CD8-positive, alpha-beta memory T cell (primary cell): ENCODE measurements at regions of chr10 and their contacts with region 1.

Region 1: DNA sequence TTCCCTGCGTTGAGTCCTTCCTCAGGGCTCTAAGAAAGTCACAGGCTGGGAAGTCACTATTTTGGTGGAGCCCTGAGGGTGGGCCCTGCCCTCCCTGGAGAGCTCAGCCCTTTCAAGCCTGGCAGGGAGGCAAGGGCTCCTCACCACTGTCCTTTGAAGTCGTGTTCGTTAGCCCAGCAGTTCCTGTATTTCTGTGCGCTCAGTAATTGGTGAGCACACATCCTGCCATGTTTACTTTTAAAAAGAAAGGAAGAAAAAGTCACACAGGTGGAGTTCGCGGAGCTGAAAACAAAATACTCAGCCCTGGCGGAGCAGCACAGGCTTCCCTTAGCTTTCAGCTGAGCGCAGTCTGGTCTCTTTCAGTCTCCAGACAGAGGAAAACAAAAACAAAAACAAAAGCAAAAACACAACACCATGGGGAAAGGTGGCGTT is 37.1 kb downstream of the PRKCQ start:
- DNase-seq: peak; percentile 18 to 81 (median 70)
- H3K4me3 ChIP-seq: peak overlapping the region; percentile 53
- H3K4me3 Mint-ChIP-seq: peak overlapping the region; percentile 77 to 96 (median 93)
- H3K27ac ChIP-seq: peak overlapping the region; percentile 66
- H3K27ac Mint-ChIP-seq: peak overlapping the region; percentile 96 to 100 (median 100)
- H3K4me1 ChIP-seq: peaks cover 77% of the 10 kb centered on the region
- H3K4me1 Mint-ChIP-seq: peaks cover 70 to 86% (median 77%) of the 10 kb centered on the region in 3 donors
- H3K27me3 ChIP-seq: no peaks in the 10 kb centered on the region
- H3K27me3 Mint-ChIP-seq: peaks cover 0 to 1% of the 10 kb centered on the region in 2 donors

Region 2: GRCh38 chr10:6530211-6530840 is 12.7 kb before region 1 on chr10:
- CTCF ChIA-PET with region 1: interaction called, 20 read pairs
- POLR2A ChIA-PET with region 1: interaction called, 27 read pairs
- DNase-seq: peak; percentile 55 to 85 (median 78)
- H3K4me3 ChIP-seq: peak overlapping the region; percentile 32
- H3K4me3 Mint-ChIP-seq: peak overlapping the region; percentile 65 to 93 (median 89)
- H3K27ac ChIP-seq: peak overlapping the region; percentile 69
- H3K27ac Mint-ChIP-seq: peak overlapping the region; percentile 93 to 100 (median 98)
- H3K4me1 ChIP-seq: peaks cover 72% of the 10 kb centered on the region
- H3K4me1 Mint-ChIP-seq: peaks cover 86 to 96% (median 96%) of the 10 kb centered on the region in 3 donors
- H3K27me3 ChIP-seq: no peaks in the 10 kb centered on the region
- H3K27me3 Mint-ChIP-seq: peaks cover 0 to 2% of the 10 kb centered on the region in 2 donors

Region 3: DNA sequence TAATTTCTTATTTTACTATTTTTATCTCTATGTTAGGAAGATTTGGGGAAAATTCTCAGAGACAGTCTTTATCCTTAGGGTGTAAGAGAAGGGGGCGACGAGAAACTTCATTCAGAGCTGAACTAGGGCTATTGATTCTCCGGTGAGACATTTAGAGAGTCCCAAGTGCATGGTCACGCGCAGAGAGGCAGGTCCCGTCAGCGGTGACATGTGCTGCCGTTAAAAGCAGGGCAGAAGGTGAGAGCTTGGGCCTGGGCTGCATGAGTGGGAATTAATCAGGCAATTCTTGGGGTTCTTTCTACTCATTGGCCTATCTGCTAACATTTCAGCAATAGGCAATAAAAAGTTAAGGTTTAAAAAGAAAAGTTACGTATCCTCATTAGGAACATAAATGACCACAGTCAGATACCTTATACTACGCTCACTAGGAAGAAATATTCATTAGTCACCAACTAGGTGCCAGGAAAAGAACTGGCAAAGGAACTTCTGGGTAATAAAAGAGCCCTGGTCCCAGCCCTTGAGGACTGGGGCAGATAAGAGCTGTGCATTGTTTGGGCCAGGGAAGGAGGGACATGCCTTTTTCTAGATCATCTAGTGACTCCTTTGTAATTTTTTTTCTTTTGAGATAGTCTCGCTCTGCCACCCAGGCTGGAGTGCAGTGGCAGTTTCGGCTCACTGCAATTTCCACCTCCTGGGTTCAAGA is 15.9 kb after region 1 on chr10:
- CTCF ChIA-PET with region 1: interaction called, 7 read pairs
- POLR2A ChIA-PET with region 1: interaction called, 10 read pairs
- DNase-seq: peak in 1 of 5 donors; percentile 58
- H3K4me3 ChIP-seq: no peak overlapping the region
- H3K4me3 Mint-ChIP-seq: peak overlapping the region; percentile 53 to 90 (median 84)
- H3K27ac ChIP-seq: peak overlapping the region; percentile 20
- H3K27ac Mint-ChIP-seq: peak overlapping the region; percentile 81 to 99 (median 94)
- H3K4me1 ChIP-seq: peaks cover 91% of the 10 kb centered on the region
- H3K4me1 Mint-ChIP-seq: peaks cover 87 to 96% (median 94%) of the 10 kb centered on the region in 3 donors
- H3K27me3 ChIP-seq: no peaks in the 10 kb centered on the region
- H3K27me3 Mint-ChIP-seq: no peaks in the 10 kb centered on the region